H1 (cell line): ENCODE measurements at regions of chr22 and their contacts with region 1.

Region 1: DNA sequence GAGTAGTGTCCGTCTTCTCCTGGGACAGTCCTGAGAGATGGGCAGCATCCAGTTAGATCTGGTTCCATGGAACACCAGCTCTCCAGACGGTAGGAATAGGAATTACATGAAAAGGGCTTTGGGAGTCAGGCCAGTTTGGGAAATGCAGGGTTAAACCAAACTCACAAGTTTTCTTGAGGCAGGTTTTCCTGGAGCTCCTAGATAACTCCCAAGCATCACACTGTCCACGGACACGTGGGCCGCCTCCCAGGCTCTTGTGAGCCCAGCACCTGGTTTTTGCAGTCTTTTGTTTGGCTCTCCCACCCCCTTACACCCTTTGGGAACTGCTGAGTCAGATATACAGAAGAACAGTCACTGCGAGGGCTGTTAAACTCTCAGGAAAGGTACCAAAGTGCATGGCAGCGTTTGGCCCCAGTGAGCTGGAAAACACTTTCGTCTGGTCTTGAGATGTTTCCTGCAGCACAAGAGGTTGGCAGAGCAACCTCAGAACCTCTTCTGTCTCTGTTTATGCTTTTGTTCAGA is 90.0 kb downstream of the BCR start:
- DNase-seq: no peak
- H3K4me3 ChIP-seq: no peak overlapping the region
- H3K27ac ChIP-seq: no peak overlapping the region
- H3K4me1 ChIP-seq: peaks cover 0 to 29% (median 20%) of the 10 kb centered on the region in 4 experiments; a peak in 6 of 7 replicates
- H3K27me3 ChIP-seq: no peaks in the 10 kb centered on the region
- CTCF ChIP-seq: peak in 2 of 3 experiments; percentile 50 to 58; a peak in 3 of 4 replicates
- EP300 ChIP-seq: no peak
- POLR2A ChIP-seq: no peak; a peak in 1 of 3 replicates
- RAD21 ChIP-seq: peak; percentile 57 to 69

Region 2: DNA sequence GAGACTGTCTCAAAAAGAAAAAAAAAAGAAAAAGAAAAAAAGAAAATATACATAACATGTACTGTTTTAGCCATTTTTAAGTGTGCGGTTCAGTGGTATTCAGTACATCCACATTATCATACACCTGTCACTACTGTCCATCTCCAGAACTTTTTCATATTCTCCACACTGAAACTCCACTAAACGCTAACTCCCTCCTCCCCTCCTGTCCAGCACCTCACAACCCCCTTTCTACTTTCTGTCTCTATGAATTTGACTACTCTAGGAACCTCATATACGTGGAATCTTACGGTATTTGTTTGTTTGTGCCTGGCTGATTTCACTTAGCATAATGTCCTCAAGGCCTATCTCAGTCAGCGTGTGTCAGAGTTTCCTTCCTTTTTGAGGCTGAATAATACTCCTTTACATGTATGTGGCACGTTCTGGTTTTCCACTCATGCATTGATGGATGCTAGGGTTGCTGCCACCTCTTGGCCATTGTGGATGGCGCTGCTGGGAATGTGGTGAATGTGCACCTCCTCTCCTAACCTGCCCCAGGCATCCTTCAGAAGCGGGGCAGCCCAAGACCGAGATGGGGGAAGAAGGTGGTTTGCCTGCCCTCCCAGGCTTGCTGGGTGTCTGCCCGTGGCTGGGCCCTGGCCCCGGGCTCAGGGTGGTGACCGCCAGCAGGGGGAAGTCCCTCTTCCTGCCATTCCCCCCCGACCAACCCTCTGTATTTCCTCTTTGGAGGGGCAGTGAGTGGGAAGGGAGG is 29.5 kb before region 1 on chr22:
- CTCF ChIA-PET with region 1: interaction called, 10 read pairs
- POLR2A ChIA-PET with region 1: interaction called, 12 read pairs
- DNase-seq: no peak
- H3K4me3 ChIP-seq: peak overlapping the region in 2 of 4 experiments; percentile 17 to 56; a peak in 1 of 8 replicates
- H3K27ac ChIP-seq: peak overlapping the region; percentile 85
- H3K4me1 ChIP-seq: peaks cover 27 to 63% (median 47%) of the 10 kb centered on the region in 4 experiments
- H3K27me3 ChIP-seq: no peaks in the 10 kb centered on the region
- CTCF ChIP-seq: peak; percentile 56 to 74 (median 72)
- EP300 ChIP-seq: no peak
- POLR2A ChIP-seq: 0 out of 3 replicates have a peak, but pooled peaks of 1 of the 2 experiments have one; percentile 23
- RAD21 ChIP-seq: peak; percentile 33 to 59

Region 3: DNA sequence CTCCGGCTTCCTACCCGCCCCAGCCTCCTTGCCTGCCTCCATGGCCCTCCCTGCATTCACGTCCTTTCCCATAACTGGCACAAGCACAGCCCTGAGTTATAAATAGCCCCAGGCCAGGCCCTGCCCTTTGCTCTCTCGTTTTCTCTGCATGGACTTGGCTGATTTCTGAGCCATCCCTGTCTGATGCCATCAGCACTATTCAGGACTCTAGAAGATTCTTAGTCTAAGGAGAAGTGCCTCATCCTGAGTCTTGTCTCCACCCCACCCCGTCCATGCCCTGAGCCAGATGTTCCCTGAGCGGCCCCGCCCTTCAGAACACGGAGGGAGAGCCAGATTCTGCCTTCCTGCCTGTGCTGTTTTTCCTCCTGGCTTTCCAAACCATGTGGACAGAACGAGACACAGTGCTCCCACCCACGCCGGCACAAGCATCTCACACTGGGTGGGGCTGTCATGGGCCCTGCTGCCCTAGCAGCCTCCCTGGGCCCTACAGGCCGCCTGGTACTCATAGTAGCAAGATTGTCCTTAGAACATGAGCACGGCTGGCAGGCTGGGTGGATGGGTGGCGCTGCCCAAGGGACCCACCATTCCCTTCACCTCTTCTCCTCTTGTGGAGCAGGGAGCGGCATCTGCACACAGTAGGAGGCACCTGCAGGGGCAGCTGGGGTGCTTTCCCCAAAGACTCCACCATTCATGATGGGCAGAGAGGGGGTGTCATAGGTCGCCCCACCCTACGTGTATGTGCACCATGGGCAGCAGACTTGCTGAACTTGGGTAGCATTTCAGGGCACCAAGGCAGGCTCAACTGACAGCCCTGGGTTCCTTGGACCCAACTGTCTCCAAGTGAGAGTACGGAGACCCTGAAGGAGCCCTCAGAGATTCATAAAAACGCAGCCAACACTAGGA is 13.0 kb before region 1 on chr22:
- CTCF ChIA-PET with region 1: interaction called, 27 read pairs
- POLR2A ChIA-PET with region 1: interaction called, 3 read pairs
- DNase-seq: no peak
- H3K4me3 ChIP-seq: no peak overlapping the region
- H3K27ac ChIP-seq: no peak overlapping the region
- H3K4me1 ChIP-seq: peaks cover 3 to 14% (median 7%) of the 10 kb centered on the region in 4 experiments
- H3K27me3 ChIP-seq: no peaks in the 10 kb centered on the region
- CTCF ChIP-seq: no peak
- EP300 ChIP-seq: no peak
- POLR2A ChIP-seq: no peak
- RAD21 ChIP-seq: no peak